MCF 10A (cell line): ENCODE measurements at regions of chr10 and their contacts with region 1.

Region 1: GRCh38 chr10:85642421-85643170 is 724.0 kb downstream of the GRID1 start:
- DNase-seq: peak; percentile 85
- H3K4me3 Mint-ChIP-seq: peak overlapping the region; percentile 12
- H3K27ac Mint-ChIP-seq: peak overlapping the region; percentile 93
- H3K4me1 Mint-ChIP-seq: peaks cover 43% of the 10 kb centered on the region
- H3K27me3 Mint-ChIP-seq: no peaks in the 10 kb centered on the region
- CTCF ChIP-seq: no peak

Region 2: DNA sequence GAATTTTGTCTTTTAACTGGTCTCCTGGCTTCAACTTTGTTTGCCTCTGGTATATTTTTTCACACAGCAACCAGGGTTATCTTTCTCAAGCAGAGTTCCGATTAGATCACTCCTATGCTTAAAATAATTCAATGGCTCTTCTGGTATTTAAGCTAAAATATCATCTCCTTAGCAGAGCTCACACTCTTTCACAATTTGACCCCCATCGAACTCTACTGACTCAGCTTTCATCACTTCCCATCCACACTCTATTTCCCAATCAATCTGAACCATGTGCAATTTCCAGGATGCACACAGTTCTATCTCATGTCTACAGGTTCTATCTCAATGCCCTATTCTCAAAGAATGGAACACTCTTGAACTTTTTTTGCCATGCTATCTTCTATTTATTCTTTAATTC is 85.5 kb before region 1 on chr10:
- CTCF ChIA-PET with region 1: no interaction called
- POLR2A ChIA-PET with region 1: no interaction called
- intact Hi-C with region 1: loop called (anchors 5 kb)
- DNase-seq: peak; percentile 91
- H3K4me3 Mint-ChIP-seq: no peak overlapping the region
- H3K27ac Mint-ChIP-seq: no peak overlapping the region
- H3K4me1 Mint-ChIP-seq: no peaks in the 10 kb centered on the region
- H3K27me3 Mint-ChIP-seq: no peaks in the 10 kb centered on the region
- CTCF ChIP-seq: no peak

Region 3: GRCh38 chr10:85666102-85666501 is 23.5 kb after region 1 on chr10:
- CTCF ChIA-PET with region 1: no interaction called
- POLR2A ChIA-PET with region 1: no interaction called
- intact Hi-C with region 1: no loop called
- DNase-seq: no peak
- H3K4me3 Mint-ChIP-seq: no peak overlapping the region
- H3K27ac Mint-ChIP-seq: no peak overlapping the region
- H3K4me1 Mint-ChIP-seq: no peaks in the 10 kb centered on the region
- H3K27me3 Mint-ChIP-seq: no peaks in the 10 kb centered on the region
- CTCF ChIP-seq: no peak